ENCODE measurements at regions of chr15 and their contacts with region 1.

Region 1: GRCh38 chr15:39756806-39757522 is 25.7 kb downstream of the FSIP1 start:
- DNase-seq: no peak
- ATAC-seq: no peak
- H3K4me3 Mint-ChIP-seq: no peak overlapping the region
- H3K27ac Mint-ChIP-seq: no peak overlapping the region
- H3K4me1 Mint-ChIP-seq: no peaks in the 10 kb centered on the region
- H3K27me3 Mint-ChIP-seq: peaks cover 5% of the 10 kb centered on the region

Region 2: GRCh38 chr15:38817427-38818156 is 939.4 kb before region 1 on chr15:
- CTCF ChIA-PET with region 1: interaction called, 11 read pairs
- POLR2A ChIA-PET with region 1: interaction called, 4 read pairs
- intact Hi-C with region 1: loop called in 1 of 2 experiments (anchors 10 kb)
- DNase-seq: peak; percentile 90
- ATAC-seq: peak; percentile 96
- H3K4me3 Mint-ChIP-seq: no peak overlapping the region
- H3K27ac Mint-ChIP-seq: no peak overlapping the region
- H3K4me1 Mint-ChIP-seq: peaks cover 5% of the 10 kb centered on the region
- H3K27me3 Mint-ChIP-seq: peaks cover 8% of the 10 kb centered on the region

Region 3: DNA sequence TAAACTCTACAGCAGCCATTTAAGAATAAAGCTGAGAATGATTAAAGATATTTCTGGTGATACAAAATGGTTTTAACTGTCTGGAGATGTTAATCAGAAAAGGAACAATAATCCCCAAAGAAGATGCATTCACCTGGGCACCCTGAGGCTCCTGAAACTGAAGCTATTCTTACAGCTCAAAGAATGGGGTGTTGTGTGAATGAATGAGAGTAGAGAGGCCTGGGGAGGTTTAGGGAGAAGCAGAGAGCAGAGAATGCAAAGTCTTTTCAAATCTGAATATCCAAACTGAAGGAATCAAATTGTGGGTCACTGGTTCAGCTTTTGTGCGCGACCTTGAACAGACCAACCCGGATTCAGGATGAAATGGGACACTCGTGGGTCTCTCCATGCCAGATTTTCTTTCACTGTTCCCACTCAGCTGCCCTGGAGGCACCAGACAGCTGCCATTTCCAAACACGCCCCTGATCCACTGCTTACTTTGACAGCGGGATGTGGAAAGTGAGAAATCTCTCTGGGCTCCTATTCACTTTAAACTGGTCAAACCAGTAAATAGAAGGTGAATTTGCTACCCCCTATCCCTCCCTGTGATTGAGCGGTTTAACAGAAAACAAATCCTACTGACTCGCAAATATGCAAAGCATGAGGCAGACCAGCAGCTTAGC is 661.6 kb before region 1 on chr15:
- CTCF ChIA-PET with region 1: no interaction called
- POLR2A ChIA-PET with region 1: no interaction called
- intact Hi-C with region 1: no loop called
- DNase-seq: no peak
- ATAC-seq: no peak
- H3K4me3 Mint-ChIP-seq: no peak overlapping the region
- H3K27ac Mint-ChIP-seq: no peak overlapping the region
- H3K4me1 Mint-ChIP-seq: no peaks in the 10 kb centered on the region
- H3K27me3 Mint-ChIP-seq: peaks cover 2% of the 10 kb centered on the region

Region 4: DNA sequence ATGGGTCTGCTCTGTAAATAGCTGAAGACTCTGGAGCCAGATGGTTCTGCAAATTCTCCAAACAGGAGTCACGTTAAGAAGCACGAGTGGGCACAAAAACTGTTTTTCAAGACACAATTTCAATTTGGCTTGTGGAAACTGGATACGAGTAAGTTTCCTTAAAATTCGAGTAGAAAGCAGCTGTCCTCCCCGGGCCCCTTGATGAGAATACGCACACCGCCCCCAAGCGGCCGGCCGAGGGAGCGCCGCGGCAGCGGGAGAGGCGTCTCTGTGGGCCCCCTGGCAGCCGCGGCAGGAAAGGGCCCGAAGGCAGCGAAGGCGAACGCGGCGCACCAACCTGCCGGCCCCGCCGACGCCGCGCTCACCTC is 176.9 kb before region 1 on chr15:
- CTCF ChIA-PET with region 1: interaction called, 37 read pairs
- POLR2A ChIA-PET with region 1: no interaction called
- intact Hi-C with region 1: loop called (anchors 1 to 2 kb)
- DNase-seq: peak; percentile 93
- ATAC-seq: peak; percentile 90
- H3K4me3 Mint-ChIP-seq: peak overlapping the region; percentile 53
- H3K27ac Mint-ChIP-seq: no peak overlapping the region
- H3K4me1 Mint-ChIP-seq: peaks cover 13% of the 10 kb centered on the region
- H3K27me3 Mint-ChIP-seq: peaks cover 55% of the 10 kb centered on the region

Region 5: GRCh38 chr15:39686000-39686613 is 70.9 kb before region 1 on chr15:
- CTCF ChIA-PET with region 1: interaction called, 153 read pairs
- POLR2A ChIA-PET with region 1: no interaction called
- intact Hi-C with region 1: loop called (anchors 1 kb)
- DNase-seq: peak; percentile 46
- ATAC-seq: no peak
- H3K4me3 Mint-ChIP-seq: no peak overlapping the region
- H3K27ac Mint-ChIP-seq: no peak overlapping the region
- H3K4me1 Mint-ChIP-seq: peaks cover 1% of the 10 kb centered on the region
- H3K27me3 Mint-ChIP-seq: no peaks in the 10 kb centered on the region

Region 6: GRCh38 chr15:39770748-39771689 is 14.1 kb after region 1 on chr15:
- CTCF ChIA-PET with region 1: interaction called, 48 read pairs
- POLR2A ChIA-PET with region 1: no interaction called
- intact Hi-C with region 1: no loop called
- DNase-seq: no peak
- ATAC-seq: no peak
- H3K4me3 Mint-ChIP-seq: no peak overlapping the region
- H3K27ac Mint-ChIP-seq: no peak overlapping the region
- H3K4me1 Mint-ChIP-seq: peaks cover 16% of the 10 kb centered on the region
- H3K27me3 Mint-ChIP-seq: no peaks in the 10 kb centered on the region